Right ventricle myocardium superior (tissue), 1 donor: ENCODE measurements at regions of chrX and their contacts with region 1.

Region 1: DNA sequence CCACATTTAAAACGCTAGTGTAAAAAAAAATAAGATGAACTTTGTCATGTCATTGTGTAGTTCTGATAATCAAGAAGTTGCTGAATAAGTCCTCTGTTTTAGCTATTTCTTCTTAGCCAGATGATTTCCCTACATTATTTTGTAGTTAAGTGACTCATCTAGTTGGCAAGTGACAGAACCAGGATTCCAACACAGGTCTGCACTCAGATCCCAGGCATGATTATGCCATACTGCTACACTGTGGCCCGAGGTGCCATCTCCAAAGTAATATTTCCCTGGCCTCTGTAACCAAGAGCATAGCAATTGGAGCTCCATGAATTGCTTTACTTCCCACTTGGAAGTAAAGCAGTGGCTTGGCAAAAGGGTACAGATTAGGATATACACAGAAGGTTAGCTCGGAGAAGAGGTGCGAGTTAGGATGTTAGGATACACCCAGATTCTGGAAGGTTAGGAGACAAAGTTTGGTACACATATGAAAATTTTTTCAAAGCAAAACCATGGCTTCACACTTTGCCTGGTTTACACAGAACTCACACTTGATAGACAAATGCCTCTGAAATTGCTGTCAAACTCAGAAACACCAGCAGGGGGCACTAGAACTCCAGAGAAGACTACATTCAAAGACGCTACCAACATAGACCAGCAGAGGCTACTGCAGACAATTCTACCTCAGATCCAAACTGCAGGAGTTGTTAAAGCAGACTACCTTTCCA is 41.4 kb downstream of the SRPX2 start:
- DNase-seq: no peak
- ATAC-seq: peak; percentile 74

Region 2: DNA sequence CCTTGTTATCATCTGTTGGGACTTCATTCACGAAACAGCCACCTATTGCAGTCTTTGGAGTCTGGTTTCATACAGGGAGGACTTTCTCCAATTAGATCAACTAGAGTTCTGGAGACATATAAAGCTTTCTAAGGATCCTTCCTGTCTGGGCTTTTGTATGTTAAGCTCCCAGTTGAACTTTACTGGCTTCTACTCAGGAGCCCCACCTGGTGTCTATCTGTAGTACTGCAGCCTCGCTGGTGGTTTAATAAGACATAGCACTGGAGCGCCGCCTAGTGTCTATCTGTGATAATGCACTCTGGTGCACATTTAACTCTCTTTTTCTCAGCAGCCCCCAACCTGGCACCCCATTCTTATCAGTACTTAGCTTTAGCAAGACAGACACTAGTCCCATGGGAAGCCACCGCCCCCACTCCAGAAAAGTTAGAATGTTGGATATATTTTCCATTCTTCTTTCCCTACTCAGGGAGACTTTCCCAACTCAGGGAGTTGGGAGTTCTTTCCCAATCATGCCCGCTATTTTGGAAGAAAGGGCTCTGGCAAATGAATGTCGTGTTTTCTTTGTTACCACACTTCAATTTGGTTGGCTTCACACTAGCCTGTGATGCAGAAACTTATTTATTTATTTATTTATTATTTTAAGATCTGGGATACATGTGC is 83.4 kb after region 1 on chrX:
- intact Hi-C with region 1: loop called (anchors 5 kb)
- DNase-seq: peak; percentile 83
- ATAC-seq: peak; percentile 39